Activated naive CD4-positive, alpha-beta T cell treated with anti-CD3 and anti-CD28 coated beads for 36 hours (primary cell): ENCODE measurements at regions of chr16 and their contacts with region 1.

Region 1: DNA sequence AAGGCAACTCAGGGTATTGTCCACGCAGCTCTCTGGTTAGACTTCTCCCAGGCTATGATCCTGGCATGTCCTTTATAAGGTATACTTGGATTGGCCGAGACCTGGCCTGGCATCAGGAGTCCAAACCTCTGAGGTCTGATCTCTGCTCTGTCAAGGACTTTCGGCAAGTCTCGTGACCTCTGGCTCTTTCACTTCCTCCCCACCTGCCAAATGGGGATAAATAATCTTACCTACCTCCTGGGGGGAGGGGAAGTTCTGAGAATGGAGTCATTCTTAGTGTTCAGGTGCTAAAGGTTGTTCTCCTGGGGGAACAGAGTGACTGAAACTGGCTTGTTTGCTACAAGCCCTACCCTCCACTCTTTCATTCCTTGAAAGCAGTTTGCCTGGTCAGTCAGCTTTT is 7.6 kb downstream of the ATXN1L start:
- DNase-seq: no peak
- H3K4me3 Mint-ChIP-seq: no peak overlapping the region
- H3K27ac Mint-ChIP-seq: peak overlapping the region; percentile 20
- H3K4me1 Mint-ChIP-seq: peaks cover 52% of the 10 kb centered on the region
- H3K27me3 Mint-ChIP-seq: no peaks in the 10 kb centered on the region

Region 2: GRCh38 chr16:71873199-71873598 is 19.8 kb after region 1 on chr16:
- CTCF ChIA-PET with region 1: interaction called, 4 read pairs
- intact Hi-C with region 1: loop called (anchors 2 kb)
- DNase-seq: no peak
- H3K4me3 Mint-ChIP-seq: peak overlapping the region; percentile 22
- H3K27ac Mint-ChIP-seq: peak overlapping the region; percentile 46
- H3K4me1 Mint-ChIP-seq: peaks cover 32% of the 10 kb centered on the region
- H3K27me3 Mint-ChIP-seq: no peaks in the 10 kb centered on the region

Region 3: GRCh38 chr16:72705801-72706200 is 852.4 kb after region 1 on chr16:
- CTCF ChIA-PET with region 1: no interaction called
- intact Hi-C with region 1: no loop called
- DNase-seq: no peak
- H3K4me3 Mint-ChIP-seq: no peak overlapping the region
- H3K27ac Mint-ChIP-seq: no peak overlapping the region
- H3K4me1 Mint-ChIP-seq: no peaks in the 10 kb centered on the region
- H3K27me3 Mint-ChIP-seq: no peaks in the 10 kb centered on the region